ENCODE measurements at regions of chr19 and their contacts with region 1.

Region 1: DNA sequence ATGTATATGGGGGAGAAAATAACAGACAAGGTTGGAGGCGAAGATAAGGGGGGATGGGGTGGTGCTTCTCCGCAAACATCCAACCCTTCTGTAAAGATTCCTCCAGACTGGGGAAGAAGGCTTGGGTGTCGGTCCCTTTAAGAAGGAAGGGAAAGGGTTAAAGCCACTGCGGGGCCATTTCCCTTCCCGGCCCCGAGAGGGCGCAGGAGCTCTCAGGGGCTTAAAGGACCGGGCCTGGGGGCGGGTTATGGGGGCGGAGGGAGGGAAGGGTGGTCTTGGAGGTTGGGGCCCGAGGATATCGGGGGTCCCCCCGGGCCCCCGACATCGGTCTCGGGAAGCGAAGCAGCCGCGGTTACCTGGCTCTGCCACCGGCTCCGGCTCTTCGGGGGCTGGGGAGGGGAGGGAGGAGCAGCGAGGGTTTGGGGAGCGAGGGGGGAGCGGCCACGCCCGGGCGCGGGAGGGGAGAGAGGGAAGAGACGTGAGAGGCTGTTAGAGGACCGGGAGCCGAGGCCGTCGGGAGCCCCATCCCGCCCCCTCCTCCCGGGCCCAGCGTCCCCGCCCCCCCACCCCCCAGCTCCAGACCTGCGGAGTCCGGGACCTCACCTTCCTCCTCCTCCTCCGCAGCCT is 2.8 kb downstream of the TNNT1 start:
- H3K4me3 Mint-ChIP-seq: peak overlapping the region; percentile 15
- H3K27ac Mint-ChIP-seq: no peak overlapping the region
- H3K4me1 Mint-ChIP-seq: peaks cover 23% of the 10 kb centered on the region
- H3K27me3 Mint-ChIP-seq: peaks cover 81% of the 10 kb centered on the region

Region 2: DNA sequence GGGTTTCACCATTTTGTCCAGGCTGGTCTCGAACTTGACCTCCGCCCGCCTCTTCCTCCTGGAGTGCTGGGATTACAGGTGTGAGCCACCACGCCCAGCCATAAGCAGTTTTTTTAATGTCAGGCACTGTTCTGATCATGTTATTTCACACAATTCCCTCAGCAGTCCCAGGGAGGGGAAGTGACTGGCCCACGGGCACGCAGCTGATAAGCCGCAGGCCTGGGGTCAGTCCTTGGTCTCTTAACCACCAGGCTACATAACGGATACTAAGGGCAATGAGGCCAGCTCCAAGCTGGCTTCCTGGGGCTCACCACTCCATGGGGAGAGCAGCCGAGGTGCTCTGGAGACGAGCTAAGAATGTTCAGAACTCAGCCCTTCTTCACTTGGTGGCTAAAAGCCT is 151.1 kb after region 1 on chr19:
- intact Hi-C with region 1: loop called (anchors 10 kb)
- H3K4me3 Mint-ChIP-seq: no peak overlapping the region
- H3K27ac Mint-ChIP-seq: no peak overlapping the region
- H3K4me1 Mint-ChIP-seq: peaks cover 11% of the 10 kb centered on the region
- H3K27me3 Mint-ChIP-seq: peaks cover 21% of the 10 kb centered on the region

Region 3: DNA sequence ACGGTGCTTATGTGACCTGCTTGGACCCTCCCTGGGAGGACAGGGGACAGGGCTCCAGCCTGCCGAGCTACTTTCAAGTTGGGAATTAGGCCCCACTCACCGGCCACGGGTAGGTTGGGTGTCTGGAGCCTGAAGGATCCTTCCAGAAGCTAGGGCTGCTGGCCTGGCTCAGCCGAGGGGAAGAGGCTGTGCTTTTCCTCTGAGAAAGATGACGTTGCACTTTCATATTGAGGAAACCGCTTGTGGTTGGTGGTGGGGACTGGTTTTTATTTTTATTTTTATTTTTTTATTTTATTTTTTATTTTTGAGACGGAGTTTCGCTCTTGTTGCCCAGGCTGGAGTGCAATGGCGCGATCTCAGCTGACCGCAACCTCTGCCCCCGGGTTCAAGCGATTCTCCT is 179.0 kb after region 1 on chr19 and contains the start of gene TMEM150B:
- intact Hi-C with region 1: no loop called
- H3K4me3 Mint-ChIP-seq: peak within 1 kb of the TSS; percentile 90
- H3K27ac Mint-ChIP-seq: peak within 1 kb of the TSS; percentile 94
- H3K4me1 Mint-ChIP-seq: peaks cover 68% of the 10 kb centered on the region
- H3K27me3 Mint-ChIP-seq: no peaks in the 10 kb centered on the region

Region 4: DNA sequence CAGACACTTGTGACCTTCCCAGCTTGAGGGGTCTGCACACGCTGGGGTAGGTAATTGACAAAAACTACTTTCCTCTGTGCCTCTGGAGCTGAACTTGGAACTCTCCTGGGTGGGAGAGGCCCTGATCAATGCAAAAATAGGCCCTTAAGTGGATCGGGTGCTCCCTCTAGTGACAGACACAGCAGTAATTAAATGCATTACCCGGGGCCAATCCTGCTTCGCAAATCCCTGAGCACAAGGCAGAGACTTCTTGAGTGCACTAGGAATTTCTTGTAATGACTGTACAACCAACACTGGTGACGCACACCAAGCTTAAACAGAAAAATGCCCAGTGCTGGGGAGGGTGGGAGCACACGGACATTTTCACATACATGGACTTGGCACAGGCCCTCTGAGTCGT is 272.0 kb after region 1 on chr19:
- intact Hi-C with region 1: loop called (anchors 2 kb)
- H3K4me3 Mint-ChIP-seq: peak overlapping the region; percentile 23
- H3K27ac Mint-ChIP-seq: peak overlapping the region; percentile 75
- H3K4me1 Mint-ChIP-seq: peaks cover 14% of the 10 kb centered on the region
- H3K27me3 Mint-ChIP-seq: peaks cover 17% of the 10 kb centered on the region

Region 5: GRCh38 chr19:55503502-55504251 is 357.5 kb after region 1 on chr19:
- intact Hi-C with region 1: loop called (anchors 2 kb)
- H3K4me3 Mint-ChIP-seq: peak overlapping the region; percentile 71
- H3K27ac Mint-ChIP-seq: peak overlapping the region; percentile 87
- H3K4me1 Mint-ChIP-seq: peaks cover 19% of the 10 kb centered on the region
- H3K27me3 Mint-ChIP-seq: peaks cover 25% of the 10 kb centered on the region

Measured in dendritic cell treated with granulocyte-macrophage colony-stimulating factor and Interleukin-4, amounts not matched to agents 40 ng/mL and 50 ng/mL, for 4 days (primary cell).